Panc1 (cell line): ENCODE measurements at regions of chr11 and their contacts with region 1.

Region 1: DNA sequence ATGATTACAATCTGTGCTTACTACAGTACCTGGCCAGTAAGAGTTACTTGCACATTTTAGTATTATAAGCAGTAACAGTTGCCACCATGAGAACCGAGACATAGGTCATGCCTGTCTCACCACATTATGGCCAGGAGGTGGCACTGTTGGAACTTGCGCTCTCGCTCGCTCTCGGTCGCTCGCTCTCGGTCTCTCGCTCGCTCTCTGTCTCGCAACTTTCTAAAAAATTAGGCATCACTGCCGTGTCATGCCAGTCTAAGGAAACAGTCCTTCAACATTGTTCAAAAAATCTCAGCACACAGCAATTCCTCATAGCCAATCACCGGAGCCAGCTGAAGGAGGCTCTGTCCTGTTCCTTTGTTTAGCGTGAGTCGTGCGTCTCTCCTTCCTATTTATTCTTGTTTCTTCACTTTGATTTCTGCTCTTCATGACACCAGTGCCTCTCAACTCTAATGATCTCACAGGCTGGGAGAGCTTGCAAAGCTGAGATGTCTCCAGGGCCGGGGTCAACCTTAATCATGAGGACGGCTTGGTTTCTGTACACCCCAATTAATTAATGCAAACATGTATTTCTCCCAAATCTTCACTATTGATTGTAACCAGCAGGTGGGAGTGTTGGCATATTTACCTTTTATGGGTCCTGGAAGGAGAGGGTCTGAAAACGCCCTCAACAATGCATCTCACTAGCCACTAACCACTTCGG is 6.3 kb upstream of the ADAMTS8 start:
- DNase-seq: peak; percentile 85
- ATAC-seq: peak; percentile 91
- H3K4me3 ChIP-seq: peak overlapping the region; percentile 72 to 99
- H3K27ac ChIP-seq: peak overlapping the region; percentile 93
- H3K4me1 ChIP-seq: peaks cover 13% of the 10 kb centered on the region
- H3K27me3 ChIP-seq: peaks cover 3% of the 10 kb centered on the region
- CTCF ChIP-seq: peak; percentile 97

Region 2: DNA sequence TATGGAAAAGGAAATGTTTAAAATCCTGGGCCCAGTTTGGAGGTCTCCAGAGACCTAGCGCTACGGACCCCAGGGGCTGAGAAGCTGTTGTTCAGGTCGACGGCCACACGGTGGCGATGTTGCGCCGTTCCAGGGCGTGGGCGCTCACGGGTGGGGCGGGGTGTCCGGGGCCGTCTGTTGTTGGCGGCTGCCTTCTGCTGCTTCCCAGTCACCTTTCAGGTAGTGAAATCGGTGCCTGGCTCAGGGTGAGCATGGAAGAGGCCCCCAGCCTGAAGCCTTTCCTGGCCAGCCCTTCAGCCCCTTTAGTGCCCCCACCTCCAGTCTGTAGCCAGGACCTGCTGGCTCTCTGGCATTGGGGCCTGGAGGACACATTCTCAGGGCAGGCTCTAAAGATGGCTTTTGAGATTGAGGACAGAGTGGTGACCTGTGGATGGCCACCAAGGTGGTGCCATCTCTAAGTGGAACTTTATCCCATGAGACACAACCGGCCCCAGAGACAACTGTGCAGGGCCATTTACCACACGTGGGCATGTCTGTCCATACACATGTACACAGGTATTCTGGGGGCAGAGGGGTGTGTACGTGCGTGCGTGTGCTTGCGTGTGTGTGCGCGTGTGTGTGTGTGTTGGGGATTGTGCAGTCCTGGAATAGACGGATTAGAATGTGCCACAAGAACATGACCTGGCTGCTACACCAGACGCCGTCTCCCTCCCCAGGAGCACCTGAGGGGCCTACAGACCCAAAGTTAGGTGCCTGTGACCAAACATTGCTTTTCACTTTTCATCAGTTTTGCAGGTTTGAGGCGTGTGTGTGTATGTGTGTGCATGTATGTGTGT is 221.3 kb before region 1 on chr11:
- CTCF ChIA-PET with region 1: interaction called, 16 read pairs
- POLR2A ChIA-PET with region 1: no interaction called
- in situ Hi-C with region 1: no loop called
- intact Hi-C with region 1: no loop called
- DNase-seq: peak; percentile 12
- ATAC-seq: peak; percentile 86
- H3K4me3 ChIP-seq: peak overlapping the region in 1 of 2 experiments; percentile 17; a peak in 2 of 4 replicates
- H3K27ac ChIP-seq: no peak overlapping the region
- H3K4me1 ChIP-seq: 0 out of 2 replicates have a peak, but pooled peaks cover 2% of the 10 kb centered on the region
- H3K27me3 ChIP-seq: no peaks in the 10 kb centered on the region
- CTCF ChIP-seq: peak; percentile 98

Region 3: DNA sequence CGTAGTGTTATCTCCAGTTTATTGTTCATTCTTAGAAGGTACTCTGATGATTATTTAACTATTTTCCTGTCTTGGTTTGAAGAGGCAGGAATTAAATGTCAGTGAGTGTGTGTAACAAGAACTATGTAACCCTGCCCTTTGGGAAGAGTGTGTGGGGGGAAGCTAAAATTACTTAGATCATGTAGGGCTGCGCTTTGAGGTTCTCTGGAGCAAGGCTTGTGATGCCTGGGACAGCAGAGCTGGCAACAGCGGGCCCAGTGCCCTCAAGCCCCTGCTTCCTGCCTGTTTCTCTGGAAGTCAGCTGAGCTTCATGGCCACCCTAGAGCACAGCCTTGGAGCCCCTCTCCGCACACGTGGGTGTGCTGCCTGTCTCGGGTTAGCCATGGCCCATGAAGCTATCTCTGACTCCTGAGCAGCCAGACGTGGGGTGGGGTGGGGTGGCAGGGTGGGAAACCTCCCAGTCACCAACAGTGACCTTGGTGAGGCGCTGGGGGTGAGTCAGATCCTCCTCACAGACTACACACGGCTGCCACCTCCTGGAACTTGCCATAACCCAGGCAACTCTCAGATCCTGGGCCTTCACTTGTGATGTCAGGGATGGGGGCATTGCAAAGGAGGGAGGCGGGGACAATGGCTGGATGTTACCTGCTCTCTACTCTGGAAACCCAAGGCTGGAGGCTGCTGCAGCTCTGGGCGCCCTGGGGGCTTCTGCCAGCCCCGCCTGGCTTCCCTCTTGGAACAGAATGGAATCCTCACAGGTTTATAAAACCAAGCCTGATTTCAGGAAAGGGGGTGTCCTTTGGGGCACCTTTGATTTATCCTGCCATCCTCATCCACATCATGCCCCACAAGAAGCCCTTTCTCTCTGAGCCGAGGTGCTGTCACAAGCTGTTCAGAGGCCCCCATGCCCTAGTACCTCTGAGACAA is 393.0 kb after region 1 on chr11:
- CTCF ChIA-PET with region 1: interaction called, 6 read pairs
- POLR2A ChIA-PET with region 1: no interaction called
- in situ Hi-C with region 1: no loop called
- intact Hi-C with region 1: loop called (anchors 1 kb)
- DNase-seq: peak; percentile 27
- ATAC-seq: peak; percentile 95
- H3K4me3 ChIP-seq: no peak overlapping the region
- H3K27ac ChIP-seq: peak overlapping the region; percentile 83
- H3K4me1 ChIP-seq: peaks cover 26% of the 10 kb centered on the region
- H3K27me3 ChIP-seq: no peaks in the 10 kb centered on the region
- CTCF ChIP-seq: peak; percentile 82

Region 4: GRCh38 chr11:130861902-130862860 is 427.5 kb after region 1 on chr11:
- CTCF ChIA-PET with region 1: interaction called, 39 read pairs
- POLR2A ChIA-PET with region 1: no interaction called
- in situ Hi-C with region 1: no loop called
- intact Hi-C with region 1: loop called (anchors 1 kb)
- DNase-seq: peak; percentile 78
- ATAC-seq: peak; percentile 90
- H3K4me3 ChIP-seq: peak overlapping the region in 1 of 2 experiments; percentile 30; a peak in 1 of 4 replicates
- H3K27ac ChIP-seq: peak overlapping the region; percentile 78
- H3K4me1 ChIP-seq: peaks cover 4% of the 10 kb centered on the region
- H3K27me3 ChIP-seq: no peaks in the 10 kb centered on the region
- CTCF ChIP-seq: peak; percentile 100

Region 5: DNA sequence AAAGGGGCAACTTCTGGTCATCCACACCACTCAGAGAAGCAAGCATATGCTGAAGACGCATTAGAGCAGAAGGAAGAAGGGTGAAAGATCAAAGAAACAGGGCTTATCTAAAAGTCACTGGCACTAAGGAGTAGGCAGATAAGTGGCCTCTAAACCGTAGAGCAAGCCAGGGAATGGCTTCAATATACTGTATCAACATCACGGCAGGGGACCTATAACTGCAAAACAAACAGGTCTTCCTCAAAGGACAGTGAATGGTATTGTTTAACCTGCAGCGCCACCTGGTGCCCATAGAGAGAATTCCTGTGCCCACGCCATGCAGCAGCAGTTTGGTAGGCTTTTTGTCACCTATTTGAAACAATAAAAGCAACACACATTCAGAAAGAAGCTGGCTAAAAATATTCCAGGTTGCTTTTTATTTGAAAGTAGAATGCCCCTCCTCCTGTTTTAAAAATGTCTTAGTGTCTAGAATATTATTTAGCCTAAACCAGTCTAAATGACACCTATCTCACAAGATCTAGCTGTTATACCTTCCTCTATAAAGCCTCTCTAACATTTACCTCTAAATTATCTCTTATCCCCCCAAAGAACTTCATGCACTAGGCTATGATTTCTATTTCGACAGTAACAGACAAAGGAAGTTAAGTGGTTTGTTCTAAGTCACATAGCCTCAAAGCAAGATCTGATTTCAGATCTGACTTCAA is 459.8 kb after region 1 on chr11:
- CTCF ChIA-PET with region 1: interaction called, 14 read pairs
- POLR2A ChIA-PET with region 1: no interaction called
- in situ Hi-C with region 1: no loop called
- intact Hi-C with region 1: no loop called
- DNase-seq: peak; percentile 56
- ATAC-seq: peak; percentile 86
- H3K4me3 ChIP-seq: no peak overlapping the region
- H3K27ac ChIP-seq: no peak overlapping the region
- H3K4me1 ChIP-seq: no peaks in the 10 kb centered on the region
- H3K27me3 ChIP-seq: no peaks in the 10 kb centered on the region
- CTCF ChIP-seq: peak; percentile 98